ENCODE measurements at regions of chr15 and their contacts with region 1.

Region 1: GRCh38 chr15:51883438-51883837 is 54.0 kb downstream of the TMOD3 start:
- DNase-seq: peak; percentile 41
- H3K4me3 ChIP-seq: no peak overlapping the region
- H3K27ac ChIP-seq: no peak overlapping the region
- H3K27me3 ChIP-seq: no peaks in the 10 kb centered on the region
- CTCF ChIP-seq: no peak

Region 2: GRCh38 chr15:51484781-51485180 is 398.7 kb before region 1 on chr15:
- CTCF ChIA-PET with region 1: no interaction called
- POLR2A ChIA-PET with region 1: no interaction called
- DNase-seq: no peak
- H3K4me3 ChIP-seq: no peak overlapping the region
- H3K27ac ChIP-seq: no peak overlapping the region
- H3K27me3 ChIP-seq: no peaks in the 10 kb centered on the region
- CTCF ChIP-seq: no peak

Region 3: DNA sequence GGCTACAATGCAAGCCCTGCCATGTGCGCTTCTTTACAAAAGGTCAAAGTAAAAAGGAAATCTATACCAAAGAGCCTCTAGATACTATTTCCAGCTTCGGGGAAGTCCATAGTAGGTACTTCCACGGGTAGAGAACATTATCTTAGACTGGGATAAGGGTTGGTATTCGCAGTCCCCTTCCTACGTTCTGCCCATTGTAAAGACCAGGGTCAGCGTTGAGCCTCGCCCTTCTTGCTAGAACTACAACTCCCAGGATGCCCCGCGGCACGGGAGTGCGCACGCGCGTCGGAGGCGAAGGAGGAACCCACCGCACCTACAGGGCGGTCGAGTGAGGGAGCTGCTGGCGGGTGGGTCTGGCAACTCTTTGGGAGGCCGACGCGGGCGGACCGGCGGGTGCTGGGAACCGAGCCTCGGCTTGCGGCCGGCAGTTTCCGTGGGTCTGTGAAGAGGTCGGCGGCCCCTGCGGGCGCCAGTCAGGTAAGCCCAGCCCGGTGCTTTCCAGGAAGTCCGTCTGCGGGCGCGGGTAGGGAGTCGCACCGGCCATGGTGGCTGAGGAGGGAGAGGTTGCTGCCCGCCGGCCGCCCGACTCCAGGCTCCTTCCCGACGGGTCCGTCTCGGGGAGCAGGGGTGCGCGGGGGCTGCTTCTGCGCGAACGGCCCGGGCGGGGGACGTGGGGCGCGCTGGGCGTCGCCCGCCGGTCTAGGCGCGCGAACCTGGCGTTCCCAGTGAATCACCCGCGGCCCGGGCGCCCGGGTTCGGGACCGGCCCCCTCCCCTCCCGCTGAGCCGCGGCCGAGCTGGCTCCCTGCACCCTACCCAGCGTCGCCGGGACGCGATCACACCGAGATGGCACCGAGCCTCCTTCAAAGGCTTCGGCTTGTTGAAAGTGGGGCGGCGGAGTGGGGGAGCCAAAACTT is 53.8 kb before region 1 on chr15 and contains the start of gene TMOD3:
- CTCF ChIA-PET with region 1: interaction called, 3 read pairs
- POLR2A ChIA-PET with region 1: interaction called, 11 read pairs
- DNase-seq: peak; percentile 74
- H3K4me3 ChIP-seq: peak within 1 kb of the TSS; percentile 84
- H3K27ac ChIP-seq: peak within 1 kb of the TSS; percentile 80
- H3K27me3 ChIP-seq: no peaks in the 10 kb centered on the region
- CTCF ChIP-seq: peak; percentile 9; the same call in 1 of the 2 replicates
- polyA plus RNA-seq, gene TMOD3: 22.7 and 29.8 TPM in 2 replicates

Region 4: DNA sequence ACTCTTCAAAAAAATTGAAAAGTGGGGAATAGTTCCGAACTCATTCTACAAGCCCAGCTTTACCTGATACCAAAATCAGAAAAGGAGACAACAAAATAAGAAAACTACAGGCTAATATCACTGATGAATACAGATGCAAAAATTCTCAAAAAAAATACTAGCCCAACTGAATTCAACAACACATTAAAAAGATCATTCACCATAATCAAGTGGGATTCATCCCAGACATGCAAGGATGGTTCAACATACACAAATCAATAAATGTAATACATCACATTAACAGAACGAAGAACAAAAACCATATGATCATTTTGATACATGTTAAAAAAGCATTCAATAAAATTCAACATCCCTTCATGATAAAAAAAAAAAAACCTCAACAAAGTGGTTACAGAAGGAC is 572.0 kb after region 1 on chr15:
- CTCF ChIA-PET with region 1: no interaction called
- POLR2A ChIA-PET with region 1: no interaction called
- DNase-seq: no peak
- H3K4me3 ChIP-seq: no peak overlapping the region
- H3K27ac ChIP-seq: no peak overlapping the region
- H3K27me3 ChIP-seq: no peaks in the 10 kb centered on the region
- CTCF ChIP-seq: no peak

Measured in AG04450 (cell line).